ENCODE measurements at regions of chr15 and their contacts with region 1.

Region 1: GRCh38 chr15:65998486-65998885 is 129.2 kb downstream of the RAB11A start:
- DNase-seq: no peak
- H3K4me3 Mint-ChIP-seq: no peak overlapping the region
- H3K27ac Mint-ChIP-seq: no peak overlapping the region
- H3K4me1 Mint-ChIP-seq: no peaks in the 10 kb centered on the region
- H3K27me3 Mint-ChIP-seq: peaks cover 12% of the 10 kb centered on the region

Region 2: DNA sequence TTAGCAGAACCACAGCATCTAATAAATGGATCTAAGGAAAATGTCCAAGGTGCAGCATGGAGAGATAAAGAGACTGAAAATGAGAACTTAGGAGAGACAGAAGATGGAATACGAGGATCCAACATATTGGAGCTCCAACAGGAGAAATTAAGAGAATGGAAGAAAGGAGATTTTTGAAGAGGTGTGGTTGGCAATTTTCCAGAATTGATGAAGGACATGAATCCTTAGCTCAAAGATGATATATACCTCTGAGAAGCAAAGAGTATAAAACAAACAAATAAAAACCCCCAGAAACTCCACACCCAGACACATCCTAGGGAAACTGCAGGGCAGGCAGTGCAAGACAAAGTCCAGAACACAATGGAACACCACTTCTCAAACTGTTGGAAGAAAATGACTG is 113.9 kb after region 1 on chr15:
- CTCF ChIA-PET with region 1: no interaction called
- POLR2A ChIA-PET with region 1: interaction called, 11 read pairs
- DNase-seq: no peak
- H3K4me3 Mint-ChIP-seq: no peak overlapping the region
- H3K27ac Mint-ChIP-seq: no peak overlapping the region
- H3K4me1 Mint-ChIP-seq: peaks cover 8% of the 10 kb centered on the region
- H3K27me3 Mint-ChIP-seq: peaks cover 21% of the 10 kb centered on the region

Measured in activated CD4-positive, alpha-beta T cell treated with anti-CD3 and anti-CD28 coated beads, Interleukin-2, amount 10 ng/mL, durations not matched to agents 7 days and 5 days (primary cell).